ENCODE measurements at regions of chr10 and their contacts with region 1.

Region 1: GRCh38 chr10:111273635-111274034 is 196.8 kb downstream of the ADRA2A start:
- DNase-seq: no peak
- H3K4me3 ChIP-seq: no peak overlapping the region
- H3K27ac ChIP-seq: no peak overlapping the region
- H3K4me1 ChIP-seq: no peaks in the 10 kb centered on the region
- H3K27me3 ChIP-seq: no peaks in the 10 kb centered on the region
- CTCF ChIP-seq: no peak

Region 2: DNA sequence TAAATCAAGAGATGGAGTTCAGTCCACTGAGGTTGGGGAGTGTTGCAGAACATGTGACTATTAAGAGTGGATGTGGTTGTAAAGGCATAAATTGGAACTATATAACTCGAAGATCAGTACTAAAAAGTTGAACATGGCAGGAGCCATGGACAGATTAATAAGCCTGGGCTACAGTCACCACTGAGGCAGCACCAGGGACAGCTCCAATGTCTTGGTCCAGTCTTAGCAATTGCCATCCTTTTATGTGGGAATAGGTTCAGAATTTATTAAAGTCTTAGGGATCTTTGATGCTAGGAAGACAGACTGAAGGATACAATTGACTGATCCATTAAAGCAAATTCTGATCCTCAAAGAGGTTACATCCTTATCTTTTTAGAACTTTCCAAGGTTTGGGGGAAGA is 40.2 kb before region 1 on chr10:
- CTCF ChIA-PET with region 1: no interaction called
- dilution Hi-C with region 1: loop called (anchors 5 kb)
- in situ Hi-C with region 1: no loop called
- intact Hi-C with region 1: no loop called
- DNase-seq: no peak
- H3K4me3 ChIP-seq: no peak overlapping the region
- H3K27ac ChIP-seq: no peak overlapping the region
- H3K4me1 ChIP-seq: no peaks in the 10 kb centered on the region
- H3K27me3 ChIP-seq: no peaks in the 10 kb centered on the region
- CTCF ChIP-seq: no peak

Region 3: DNA sequence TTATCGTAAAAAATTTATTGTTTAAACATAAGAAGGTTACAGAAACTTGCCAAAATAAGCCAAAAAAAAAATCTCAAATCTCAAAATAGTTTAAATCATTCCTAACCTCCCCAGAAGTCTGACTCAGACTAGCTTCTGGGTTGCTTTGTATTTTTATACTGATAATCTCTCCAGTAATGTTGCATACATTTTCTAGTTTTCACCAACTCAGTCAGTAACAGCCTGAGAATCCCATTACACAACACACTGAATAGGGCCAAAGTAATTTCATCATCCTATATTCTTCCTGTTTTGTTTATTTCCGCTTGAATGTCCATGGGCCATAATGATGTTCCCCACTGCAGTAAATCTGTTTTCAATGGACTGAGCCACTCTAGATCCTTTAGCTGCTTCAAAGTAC is 431.4 kb after region 1 on chr10:
- CTCF ChIA-PET with region 1: no interaction called
- dilution Hi-C with region 1: no loop called
- in situ Hi-C with region 1: no loop called
- intact Hi-C with region 1: no loop called
- DNase-seq: no peak
- H3K4me3 ChIP-seq: no peak overlapping the region
- H3K27ac ChIP-seq: no peak overlapping the region
- H3K4me1 ChIP-seq: no peaks in the 10 kb centered on the region
- H3K27me3 ChIP-seq: no peaks in the 10 kb centered on the region
- CTCF ChIP-seq: no peak